Head of caudate nucleus (tissue), 42 donors: ENCODE measurements at regions of chr18 and their contacts with region 1.

Region 1: GRCh38 chr18:46104128-46104911 is at the start of gene HAUS1:
- DNase-seq: peak; percentile 90 to 98 (median 97)

Region 2: DNA sequence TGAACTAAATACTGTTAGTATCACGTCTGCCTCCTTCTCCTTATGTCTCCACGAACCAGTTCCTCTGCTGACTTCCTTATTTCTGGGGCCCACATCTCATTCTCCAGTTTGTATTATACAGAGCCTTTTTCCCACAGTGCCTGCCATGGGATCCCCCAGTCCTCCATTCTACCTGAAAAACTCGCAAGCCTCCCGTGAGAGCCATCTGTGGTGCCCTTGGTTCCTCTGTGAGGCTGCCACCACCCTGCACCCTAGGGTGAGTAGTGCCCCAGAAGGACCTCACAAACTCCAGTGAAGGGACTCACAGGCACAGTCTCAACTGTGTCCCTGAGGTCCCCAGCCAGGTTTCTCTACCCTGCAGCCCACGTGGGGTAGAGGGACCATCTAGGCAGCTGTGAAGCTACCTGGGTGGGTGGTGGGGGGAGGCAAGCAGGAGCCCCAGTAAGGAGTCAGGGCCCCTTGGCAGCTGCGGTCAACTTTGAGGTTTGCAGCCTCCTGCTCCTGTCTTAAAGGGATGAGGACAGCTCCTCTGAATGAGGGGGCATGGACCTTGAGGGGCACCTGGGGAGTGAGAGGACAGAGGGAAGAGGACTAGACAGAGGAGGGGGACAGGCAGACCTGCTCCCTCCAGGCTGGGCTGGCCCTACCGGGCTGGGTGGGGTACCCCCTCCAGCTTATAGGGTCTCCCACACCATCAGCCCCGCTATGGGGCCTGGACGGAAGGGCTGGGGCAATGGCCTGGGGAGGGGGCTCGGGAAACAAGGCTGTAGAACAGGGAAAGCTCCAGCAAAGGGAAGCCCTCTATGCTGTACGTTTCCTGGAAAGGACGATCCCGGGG is 33.3 kb before region 1 on chr18:
- intact Hi-C with region 1: no loop called
- DNase-seq: peak in 1 of 42 donors; percentile 5

Region 3: GRCh38 chr18:46173393-46174341 is 69.3 kb after region 1 on chr18:
- intact Hi-C with region 1: loop called (anchors 10 kb)
- DNase-seq: peak; percentile 83 to 97 (median 94)